Sciatic nerve (tissue), 2 donors: ENCODE measurements at regions of chr2 and their contacts with region 1.

Region 1: GRCh38 chr2:149561309-149561926 is 26.2 kb downstream of the MMADHC start:
- DNase-seq: no peak
- ATAC-seq: no peak

Region 2: DNA sequence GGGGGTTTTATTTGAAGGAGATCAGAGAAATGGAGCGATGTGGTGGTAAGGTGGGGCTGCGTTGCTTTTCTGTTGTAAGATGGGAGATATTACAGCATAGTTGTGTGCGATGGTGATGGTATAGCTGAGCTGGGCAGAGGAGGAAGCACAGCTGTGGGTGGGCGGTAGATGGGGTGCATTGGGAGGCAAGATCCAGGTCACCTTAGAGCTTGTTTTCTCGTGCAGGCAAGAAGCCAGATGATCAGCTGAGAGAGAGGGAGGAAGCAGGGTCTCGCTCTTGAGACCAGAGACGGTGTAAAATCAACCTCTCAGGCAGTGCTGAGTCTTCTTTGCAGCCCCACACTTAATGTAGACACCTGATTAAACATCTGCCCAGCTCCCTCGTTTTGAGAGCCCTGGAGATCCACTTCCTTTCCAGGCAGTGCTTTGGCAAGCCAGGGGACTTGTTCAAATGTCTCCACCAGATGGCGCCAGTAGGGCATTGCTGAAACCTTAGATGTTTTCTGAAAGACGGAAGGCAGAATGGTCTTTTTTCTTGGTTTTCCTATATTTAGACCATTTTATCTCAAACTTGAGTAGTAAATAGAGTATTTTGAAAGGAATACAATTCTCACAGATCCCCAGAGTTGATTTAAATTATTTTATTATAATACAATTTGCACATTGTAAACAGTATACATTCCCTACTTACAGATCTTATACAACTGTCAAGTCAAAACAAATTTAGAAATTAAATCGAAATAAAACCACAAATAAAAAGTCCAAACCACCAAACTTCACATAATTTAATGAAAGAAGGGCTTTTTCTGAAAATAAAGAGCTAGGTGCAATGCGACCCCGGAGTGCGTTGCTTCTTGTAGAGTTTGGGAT is 544.1 kb before region 1 on chr2:
- intact Hi-C with region 1: loop called (anchors 5 kb)
- DNase-seq: peak; percentile 92
- ATAC-seq: peak; percentile 81

Region 3: GRCh38 chr2:149033716-149034115 is 527.7 kb before region 1 on chr2:
- intact Hi-C with region 1: no loop called
- DNase-seq: no peak
- ATAC-seq: no peak